HCT116 (cell line): ENCODE measurements at regions of chr17 and their contacts with region 1.

Region 1: GRCh38 chr17:74659898-74660297 is 36.4 kb upstream of the CD300E start:
- DNase-seq: no peak
- ATAC-seq: no peak
- H3K4me3 ChIP-seq: no peak overlapping the region
- H3K27ac ChIP-seq: no peak overlapping the region
- H3K4me1 ChIP-seq: no peaks in the 10 kb centered on the region
- H3K27me3 ChIP-seq: peaks cover 37% of the 10 kb centered on the region
- CTCF ChIP-seq: no peak
- POLR2A ChIP-seq: no peak
- RAD21 ChIP-seq: no peak

Region 2: DNA sequence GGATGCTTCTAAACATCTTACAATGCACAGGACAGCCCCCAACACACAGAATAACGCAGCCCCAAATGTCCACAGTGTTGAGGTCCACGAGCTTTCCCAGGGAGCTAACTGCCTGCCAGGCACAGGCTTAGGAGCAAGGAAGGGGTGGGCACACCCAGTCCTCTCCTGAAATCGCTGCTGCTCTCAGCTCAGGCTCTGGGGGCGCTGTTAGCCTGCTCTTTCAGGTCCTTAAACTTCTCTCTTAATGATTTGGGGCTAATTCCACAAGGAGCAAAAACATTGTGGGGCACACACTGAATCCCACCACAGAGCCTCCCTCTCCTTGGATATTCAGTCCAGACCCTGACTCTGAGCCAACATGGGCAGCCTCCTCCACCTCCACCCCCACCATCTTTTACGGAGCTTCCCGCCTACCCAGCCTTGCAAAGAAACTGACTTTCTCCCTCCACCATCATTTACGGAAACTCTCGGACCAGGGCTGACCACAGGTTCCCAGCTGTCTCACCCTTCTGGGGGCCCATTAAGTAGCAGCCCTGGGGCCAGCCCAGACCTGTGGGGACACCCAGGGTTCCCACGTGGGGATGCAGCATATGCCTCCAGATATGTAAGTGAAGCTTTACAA is 93.7 kb before region 1 on chr17:
- CTCF ChIA-PET with region 1: interaction called, 30 read pairs
- POLR2A ChIA-PET with region 1: interaction called, 6 read pairs
- RAD21 ChIA-PET with region 1: interaction called, 4 to 7 read pairs
- intact Hi-C with region 1: no loop called
- DNase-seq: peak; percentile 57
- ATAC-seq: peak; percentile 75
- H3K4me3 ChIP-seq: no peak overlapping the region
- H3K27ac ChIP-seq: no peak overlapping the region
- H3K4me1 ChIP-seq: peaks cover 14 to 25% of the 10 kb centered on the region in 2 experiments
- H3K27me3 ChIP-seq: peaks cover 10% of the 10 kb centered on the region; the same call in 1 of the 2 replicates
- CTCF ChIP-seq: peak; percentile 84 to 98 (median 97)
- POLR2A ChIP-seq: no peak
- RAD21 ChIP-seq: peak; percentile 86

Region 3: DNA sequence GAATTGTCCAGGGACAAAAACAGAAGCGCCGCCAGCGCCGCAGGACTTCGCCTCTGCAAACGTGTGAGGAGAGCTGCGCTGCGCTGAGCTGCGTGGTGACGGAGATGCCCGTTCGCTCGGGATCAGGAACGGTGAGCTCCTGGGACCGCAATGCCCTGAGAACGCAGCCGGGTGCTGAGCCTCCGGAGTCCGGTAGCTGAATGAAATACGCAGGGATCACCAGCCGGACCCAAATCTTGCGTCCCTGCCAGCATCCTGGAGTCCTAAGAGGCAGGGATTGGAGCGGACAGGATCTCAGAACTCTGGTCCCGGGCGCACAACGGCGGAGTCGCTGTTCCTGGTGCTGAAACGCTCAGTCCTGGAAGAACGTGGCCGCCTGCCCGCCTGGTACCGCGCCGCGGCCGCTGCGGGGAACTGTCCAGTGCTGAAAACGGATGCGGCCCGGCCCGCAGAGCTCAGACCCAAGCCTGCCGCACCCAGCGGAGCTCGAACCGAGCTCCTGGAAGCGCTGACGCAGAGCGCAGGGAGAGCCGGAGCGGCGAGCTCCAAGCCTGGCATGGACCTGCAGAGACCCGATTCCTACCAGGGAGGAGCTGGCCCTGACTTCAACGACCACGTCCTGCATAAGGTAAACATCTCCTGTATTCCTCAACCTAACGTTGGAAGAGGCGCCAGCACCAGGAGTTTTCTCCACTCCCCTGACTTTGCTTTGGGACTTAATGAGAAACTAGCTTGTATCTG is 11.3 kb after region 1 on chr17:
- CTCF ChIA-PET with region 1: interaction called, 28 read pairs
- POLR2A ChIA-PET with region 1: interaction called, 4 read pairs
- RAD21 ChIA-PET with region 1: no interaction called
- intact Hi-C with region 1: no loop called
- DNase-seq: no peak
- ATAC-seq: peak; percentile 44; the same call in 1 of the 2 replicates
- H3K4me3 ChIP-seq: no peak overlapping the region
- H3K27ac ChIP-seq: no peak overlapping the region
- H3K4me1 ChIP-seq: no peaks in the 10 kb centered on the region
- H3K27me3 ChIP-seq: peaks cover 95% of the 10 kb centered on the region
- CTCF ChIP-seq: no peak
- POLR2A ChIP-seq: no peak
- RAD21 ChIP-seq: no peak

Region 4: GRCh38 chr17:74742153-74742515 is 82.2 kb after region 1 on chr17:
- CTCF ChIA-PET with region 1: interaction called, 253 read pairs
- POLR2A ChIA-PET with region 1: interaction called, 25 read pairs
- RAD21 ChIA-PET with region 1: interaction called, 41 to 52 read pairs
- intact Hi-C with region 1: no loop called
- DNase-seq: no peak
- ATAC-seq: no peak
- H3K4me3 ChIP-seq: no peak overlapping the region
- H3K27ac ChIP-seq: no peak overlapping the region
- H3K4me1 ChIP-seq: peaks cover 24 to 31% of the 10 kb centered on the region in 2 experiments
- H3K27me3 ChIP-seq: no peaks in the 10 kb centered on the region
- CTCF ChIP-seq: no peak
- POLR2A ChIP-seq: no peak
- RAD21 ChIP-seq: no peak

Region 5: DNA sequence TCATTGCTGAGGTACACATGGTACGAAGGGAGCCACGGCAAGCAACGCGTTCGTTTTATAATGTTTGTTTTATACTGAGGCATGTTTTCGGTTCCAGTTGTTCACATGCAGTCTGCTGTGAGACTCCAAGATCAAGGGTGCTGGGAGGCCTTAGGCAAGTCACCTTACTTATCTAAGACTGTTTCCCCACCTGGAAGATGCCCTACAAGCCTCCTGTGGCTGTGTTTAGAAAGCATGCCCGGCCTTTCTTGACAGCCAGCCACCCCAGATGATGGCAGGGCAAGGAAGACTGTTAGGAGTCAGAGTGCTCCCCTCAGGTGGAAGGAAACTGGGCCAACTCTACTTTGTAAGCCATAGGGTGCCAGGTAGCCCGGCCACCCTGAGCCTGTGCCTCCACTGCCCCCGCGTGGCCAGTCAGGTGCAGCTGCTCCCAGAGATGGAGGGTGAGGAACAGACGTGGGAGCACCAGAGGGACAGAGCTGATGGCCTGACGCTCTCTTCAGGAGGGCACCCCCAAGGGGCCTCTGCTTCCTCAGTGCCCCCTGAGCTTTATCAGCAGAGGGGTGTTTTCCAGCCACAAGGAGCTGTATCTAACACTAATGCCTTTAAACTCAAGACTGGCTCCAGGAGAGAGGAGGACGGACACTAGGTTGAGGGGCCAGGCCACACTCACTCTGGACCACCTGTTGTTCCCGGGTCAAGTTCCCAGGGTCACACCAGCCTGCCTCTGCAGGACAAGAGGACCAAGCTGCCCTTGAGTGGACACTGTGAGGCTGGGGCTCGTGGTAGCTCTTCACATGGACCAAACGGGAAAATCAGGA is 110.8 kb after region 1 on chr17:
- CTCF ChIA-PET with region 1: interaction called, 22 read pairs
- POLR2A ChIA-PET with region 1: no interaction called
- RAD21 ChIA-PET with region 1: interaction called in 1 of 2 experiments, 3 read pairs
- intact Hi-C with region 1: loop called (anchors 2 kb)
- DNase-seq: peak; percentile 41
- ATAC-seq: peak; percentile 85
- H3K4me3 ChIP-seq: no peak overlapping the region
- H3K27ac ChIP-seq: 0 out of 2 replicates have a peak overlapping the region, but pooled peaks have one; percentile 0
- H3K4me1 ChIP-seq: peaks cover 6 to 27% of the 10 kb centered on the region in 2 experiments; a peak in 3 of 4 replicates
- H3K27me3 ChIP-seq: no peaks in the 10 kb centered on the region
- CTCF ChIP-seq: peak; percentile 94 to 98 (median 95)
- POLR2A ChIP-seq: no peak
- RAD21 ChIP-seq: peak; percentile 95

Region 6: DNA sequence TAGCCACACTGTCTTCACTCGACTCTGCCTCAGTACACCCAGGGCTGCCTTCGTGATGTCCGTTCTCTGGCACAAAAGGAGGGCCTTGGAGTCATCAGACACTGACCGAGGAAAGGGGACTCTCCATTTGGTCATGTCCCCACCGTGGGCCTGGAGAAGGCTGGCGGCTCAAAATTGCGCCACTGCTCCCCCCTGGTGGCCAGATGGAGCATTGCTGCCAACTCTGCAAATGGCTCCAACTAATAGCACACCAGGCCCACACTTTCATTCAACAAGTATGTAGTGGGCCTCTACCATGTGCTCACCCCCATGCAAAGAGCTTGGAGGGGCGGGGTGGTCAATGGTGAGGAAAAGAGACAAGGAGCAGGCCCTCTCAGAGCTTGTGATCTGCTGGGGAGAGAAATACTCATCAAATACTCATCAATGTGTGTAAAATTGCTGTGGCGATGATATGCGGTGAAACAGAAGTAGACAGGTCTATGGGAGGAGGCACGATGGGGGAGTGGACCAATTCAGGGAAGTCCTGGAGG is 205.0 kb after region 1 on chr17:
- CTCF ChIA-PET with region 1: interaction called, 3 read pairs
- POLR2A ChIA-PET with region 1: no interaction called
- RAD21 ChIA-PET with region 1: no interaction called
- intact Hi-C with region 1: loop called (anchors 2 kb)
- DNase-seq: peak; percentile 44
- ATAC-seq: peak; percentile 80
- H3K4me3 ChIP-seq: no peak overlapping the region
- H3K27ac ChIP-seq: peak overlapping the region; percentile 7
- H3K4me1 ChIP-seq: peaks cover 0 to 17% of the 10 kb centered on the region in 2 experiments; a peak in 1 of 4 replicates
- H3K27me3 ChIP-seq: no peaks in the 10 kb centered on the region
- CTCF ChIP-seq: peak; percentile 89 to 100 (median 100)
- POLR2A ChIP-seq: no peak
- RAD21 ChIP-seq: no peak; the same call in 1 of the 2 replicates

Region 7: GRCh38 chr17:75983531-75984181 is 1323.8 kb after region 1 on chr17:
- CTCF ChIA-PET with region 1: no interaction called
- POLR2A ChIA-PET with region 1: no interaction called
- RAD21 ChIA-PET with region 1: no interaction called
- intact Hi-C with region 1: no loop called
- DNase-seq: no peak
- ATAC-seq: no peak
- H3K4me3 ChIP-seq: no peak overlapping the region
- H3K27ac ChIP-seq: no peak overlapping the region
- H3K4me1 ChIP-seq: peaks cover 10 to 33% of the 10 kb centered on the region in 2 experiments
- H3K27me3 ChIP-seq: no peaks in the 10 kb centered on the region
- CTCF ChIP-seq: no peak
- POLR2A ChIP-seq: no peak
- RAD21 ChIP-seq: no peak